ENCODE measurements at regions of chr3 and their contacts with region 1.

Region 1: DNA sequence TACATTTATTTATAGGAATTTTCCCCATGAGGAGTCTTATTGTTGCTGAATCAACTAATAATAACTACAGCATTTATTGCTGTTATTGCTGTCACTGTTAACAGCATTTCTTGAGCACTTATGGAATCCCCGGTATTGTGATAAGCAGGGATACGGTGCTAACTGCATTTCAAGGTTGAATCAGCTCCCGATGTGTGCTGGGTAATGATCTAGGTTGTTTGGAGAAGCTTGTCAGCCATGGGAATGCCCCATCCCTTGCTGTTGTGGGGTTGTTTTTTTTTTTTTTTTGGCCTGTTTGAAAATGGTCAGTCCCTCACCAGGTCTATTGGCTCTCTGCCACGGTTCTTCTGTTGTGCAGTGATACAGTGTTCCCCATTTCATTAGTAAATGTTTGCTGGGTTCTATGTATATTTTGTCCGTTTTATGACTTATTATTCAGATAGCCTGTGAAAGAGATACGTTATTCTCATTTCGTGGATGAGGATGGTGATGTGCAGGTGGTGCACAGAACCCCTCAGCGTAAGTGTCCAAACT is 48.5 kb downstream of the MED12L start:
- DNase-seq: no peak
- H3K4me3 ChIP-seq: no peak overlapping the region
- H3K27ac ChIP-seq: no peak overlapping the region
- H3K4me1 ChIP-seq: no peaks in the 10 kb centered on the region
- H3K27me3 ChIP-seq: no peaks in the 10 kb centered on the region
- CTCF ChIP-seq: no peak
- POLR2A ChIP-seq: no peak

Region 2: GRCh38 chr3:150149651-150150051 is 984.3 kb before region 1 on chr3:
- intact Hi-C with region 1: loop called (anchors 5 kb)
- DNase-seq: no peak
- H3K4me3 ChIP-seq: no peak overlapping the region
- H3K27ac ChIP-seq: no peak overlapping the region
- H3K4me1 ChIP-seq: no peaks in the 10 kb centered on the region
- H3K27me3 ChIP-seq: no peaks in the 10 kb centered on the region
- CTCF ChIP-seq: no peak
- POLR2A ChIP-seq: no peak

Region 3: DNA sequence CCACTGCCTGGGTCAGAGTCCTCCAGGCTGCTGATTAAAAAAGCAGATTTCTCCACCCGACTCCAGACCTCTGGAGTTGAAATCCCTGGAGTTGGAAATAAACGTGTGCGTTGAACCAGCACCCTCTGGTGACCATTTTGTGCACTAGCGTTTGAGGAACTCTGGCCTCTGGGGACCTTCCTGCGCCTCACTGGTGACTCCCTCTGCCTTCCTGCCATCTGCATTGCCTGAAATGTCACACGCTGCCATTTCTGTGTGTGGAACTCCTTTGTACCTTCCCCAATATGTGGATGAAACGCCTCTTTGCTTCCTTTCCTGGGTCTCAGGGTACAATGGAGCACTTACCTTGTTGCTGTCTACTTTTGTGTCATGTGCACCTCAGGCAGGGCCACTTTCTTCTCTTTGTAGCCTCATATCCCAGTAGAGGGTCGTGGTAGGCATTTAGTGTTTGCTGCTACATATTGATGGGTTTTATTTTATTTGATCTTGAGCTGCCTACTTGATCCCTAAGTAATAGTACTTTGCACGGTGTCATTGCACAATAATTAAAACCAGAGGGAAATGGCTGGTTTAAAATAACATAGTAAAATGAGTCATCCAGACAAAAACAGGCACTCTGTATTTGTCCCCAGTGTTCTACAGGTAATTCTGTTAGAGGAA is 12.2 kb after region 1 on chr3:
- intact Hi-C with region 1: no loop called
- DNase-seq: peak; percentile 42 to 69
- H3K4me3 ChIP-seq: peak overlapping the region in 1 of 3 donors; percentile 4
- H3K27ac ChIP-seq: peak overlapping the region in 1 of 2 donors; percentile 58
- H3K4me1 ChIP-seq: no peaks in the 10 kb centered on the region
- H3K27me3 ChIP-seq: no peaks in the 10 kb centered on the region
- CTCF ChIP-seq: peak; percentile 66 to 82 (median 74)
- POLR2A ChIP-seq: no peak

Measured in breast epithelium (tissue), 4 donors.